Common myeloid progenitor, CD34-positive (primary cell): ENCODE measurements at regions of chr3 and their contacts with region 1.

Region 1: GRCh38 chr3:48507351-48508061 is 3.5 kb upstream of the SHISA5 start:
- DNase-seq: peak; percentile 79 to 90 (median 88)
- H3K4me3 ChIP-seq: no peak overlapping the region
- H3K27ac ChIP-seq: no peak overlapping the region
- H3K4me1 ChIP-seq: peaks cover 0 to 32% (median 20%) of the 10 kb centered on the region in 4 experiments
- H3K27me3 ChIP-seq: no peaks in the 10 kb centered on the region

Region 2: DNA sequence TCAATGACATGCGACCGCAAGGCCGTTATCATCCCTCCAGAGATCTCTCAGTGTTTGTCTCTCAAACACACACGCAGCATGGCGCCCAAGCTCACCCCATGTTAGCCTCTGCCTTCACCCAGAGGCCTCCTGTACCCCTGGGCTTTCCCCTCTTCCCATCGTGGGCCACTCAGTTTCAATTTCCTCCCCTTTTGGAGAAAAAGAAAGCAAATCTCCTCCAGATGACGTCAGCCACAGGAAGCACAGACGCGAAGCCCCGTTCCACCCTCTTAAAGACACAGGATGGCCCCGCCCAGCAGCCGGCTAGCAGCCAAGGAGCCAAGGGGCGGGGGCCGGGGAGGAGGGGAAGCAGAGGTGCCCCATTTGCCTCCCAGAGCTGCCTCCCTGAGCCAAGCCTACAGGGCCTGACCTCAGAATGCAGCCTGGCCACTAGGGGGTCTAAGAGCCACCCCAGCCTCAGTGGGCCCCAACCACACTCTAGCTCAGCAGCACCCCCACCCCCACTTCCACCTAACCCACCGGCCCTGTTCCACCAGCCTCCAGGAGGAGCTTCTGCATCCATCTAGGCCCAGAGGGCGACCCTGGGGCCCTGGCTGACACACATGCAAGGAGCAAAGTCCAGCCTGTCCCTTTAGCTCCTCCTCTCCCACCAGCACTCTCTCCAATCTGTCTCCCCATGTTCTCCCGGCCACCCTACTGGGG is 34.4 kb before region 1 on chr3:
- CTCF ChIA-PET with region 1: interaction called, 44 read pairs
- POLR2A ChIA-PET with region 1: no interaction called
- DNase-seq: peak; percentile 97 to 99 (median 99)
- H3K4me3 ChIP-seq: peak overlapping the region; percentile 53 to 92 (median 81)
- H3K27ac ChIP-seq: peak overlapping the region; percentile 95 to 96
- H3K4me1 ChIP-seq: peaks cover 0 to 51% (median 34%) of the 10 kb centered on the region in 4 experiments
- H3K27me3 ChIP-seq: no peaks in the 10 kb centered on the region

Region 3: DNA sequence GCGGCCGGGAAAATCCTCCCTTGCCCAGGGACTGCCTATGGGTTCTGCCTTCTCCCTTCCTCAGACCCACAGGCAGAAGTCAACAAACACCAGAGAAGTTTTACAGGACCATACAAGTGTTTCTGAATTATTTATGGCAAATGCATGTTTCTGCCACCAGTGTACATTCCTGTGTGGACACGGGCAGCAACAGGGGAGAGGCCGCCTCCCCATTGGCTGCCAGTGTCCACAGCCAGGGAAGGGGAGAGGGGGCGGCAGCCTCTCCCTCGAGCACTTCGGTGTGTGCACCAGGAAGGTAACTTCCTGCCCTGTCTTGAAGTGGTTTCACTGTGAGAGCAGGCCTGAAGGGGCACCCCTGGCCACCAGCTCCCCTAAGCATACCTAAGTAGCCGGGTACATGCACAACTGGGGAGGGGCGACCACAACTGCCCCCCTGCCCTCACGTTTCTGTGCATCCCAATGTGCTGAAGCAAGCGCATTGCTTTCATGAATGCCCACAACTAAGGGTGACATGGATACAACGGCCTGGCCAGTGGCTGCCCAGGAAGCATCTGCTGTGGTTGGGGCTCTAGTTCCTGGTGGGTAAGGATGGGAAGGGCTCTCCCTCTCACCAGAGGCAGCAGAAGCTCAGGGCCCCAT is 11.3 kb after region 1 on chr3:
- CTCF ChIA-PET with region 1: interaction called, 10 read pairs
- POLR2A ChIA-PET with region 1: no interaction called
- DNase-seq: peak in 2 of 3 donors; percentile 70 to 80
- H3K4me3 ChIP-seq: peak overlapping the region in 1 of 7 experiments; percentile 19
- H3K27ac ChIP-seq: no peak overlapping the region
- H3K4me1 ChIP-seq: peaks cover 0 to 52% (median 18%) of the 10 kb centered on the region in 4 experiments
- H3K27me3 ChIP-seq: no peaks in the 10 kb centered on the region